Activated CD4-positive, alpha-beta memory T cell treated with anti-CD3 and anti-CD28 coated beads for 36 hours (primary cell): ENCODE measurements at regions of chr1 and their contacts with region 1.

Region 1: GRCh38 chr1:55021965-55022546 is 17.3 kb upstream of the PCSK9 start:
- DNase-seq: peak; percentile 80
- H3K4me3 Mint-ChIP-seq: no peak overlapping the region
- H3K27ac Mint-ChIP-seq: no peak overlapping the region
- H3K4me1 Mint-ChIP-seq: peaks cover 3% of the 10 kb centered on the region
- H3K27me3 Mint-ChIP-seq: peaks cover 11% of the 10 kb centered on the region

Region 2: DNA sequence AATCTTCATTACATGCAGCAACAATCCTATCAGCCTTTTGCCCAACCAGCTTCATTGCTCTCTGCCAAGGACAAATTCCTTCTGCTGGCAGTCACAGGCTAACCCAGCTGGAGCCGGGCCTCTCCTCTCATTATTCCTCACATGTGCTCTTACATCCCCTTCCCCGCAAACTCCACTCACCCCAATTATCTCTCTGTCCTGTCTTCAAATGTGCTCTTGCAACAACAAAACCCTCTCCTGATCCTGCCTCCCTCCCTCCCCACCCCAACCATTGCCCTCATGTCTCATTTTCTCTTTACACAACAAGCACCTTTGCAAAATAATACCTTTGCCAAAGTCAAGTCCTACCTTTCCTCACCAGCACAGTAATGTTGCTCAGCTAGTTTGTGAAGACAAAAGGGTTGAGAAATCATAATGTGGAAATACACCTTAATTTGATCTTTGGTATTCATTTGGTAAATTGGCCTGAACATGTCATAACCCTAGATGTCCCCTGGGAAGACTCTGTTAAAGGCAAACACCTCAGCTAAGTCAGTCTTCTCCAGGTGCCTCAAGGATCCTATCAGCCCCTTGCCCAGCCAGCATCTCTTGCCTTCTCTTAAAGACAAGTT is 99.0 kb before region 1 on chr1:
- CTCF ChIA-PET with region 1: no interaction called
- POLR2A ChIA-PET with region 1: no interaction called
- intact Hi-C with region 1: no loop called
- DNase-seq: no peak
- H3K4me3 Mint-ChIP-seq: no peak overlapping the region
- H3K27ac Mint-ChIP-seq: no peak overlapping the region
- H3K4me1 Mint-ChIP-seq: no peaks in the 10 kb centered on the region
- H3K27me3 Mint-ChIP-seq: peaks cover 3% of the 10 kb centered on the region

Region 3: DNA sequence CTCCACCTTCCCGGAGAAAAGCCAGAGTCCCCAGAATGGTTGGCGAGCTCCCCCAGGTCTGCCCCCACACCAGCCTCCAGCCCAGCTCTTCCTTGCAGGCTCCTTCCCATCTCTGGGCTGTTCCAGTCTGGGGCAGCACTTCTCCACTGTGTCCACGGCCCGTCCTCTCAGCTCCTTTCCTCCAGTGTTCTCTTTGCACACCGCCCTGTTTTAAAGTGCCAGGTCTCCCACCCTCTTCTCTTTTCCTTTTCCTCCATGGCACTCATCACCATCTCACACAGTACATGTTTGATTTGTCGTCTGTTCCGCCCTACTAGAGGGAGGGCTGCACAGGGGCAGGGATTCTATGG is 11.2 kb after region 1 on chr1:
- CTCF ChIA-PET with region 1: interaction called, 10 read pairs
- POLR2A ChIA-PET with region 1: no interaction called
- intact Hi-C with region 1: no loop called
- DNase-seq: no peak
- H3K4me3 Mint-ChIP-seq: no peak overlapping the region
- H3K27ac Mint-ChIP-seq: no peak overlapping the region
- H3K4me1 Mint-ChIP-seq: no peaks in the 10 kb centered on the region
- H3K27me3 Mint-ChIP-seq: peaks cover 19% of the 10 kb centered on the region

Region 4: DNA sequence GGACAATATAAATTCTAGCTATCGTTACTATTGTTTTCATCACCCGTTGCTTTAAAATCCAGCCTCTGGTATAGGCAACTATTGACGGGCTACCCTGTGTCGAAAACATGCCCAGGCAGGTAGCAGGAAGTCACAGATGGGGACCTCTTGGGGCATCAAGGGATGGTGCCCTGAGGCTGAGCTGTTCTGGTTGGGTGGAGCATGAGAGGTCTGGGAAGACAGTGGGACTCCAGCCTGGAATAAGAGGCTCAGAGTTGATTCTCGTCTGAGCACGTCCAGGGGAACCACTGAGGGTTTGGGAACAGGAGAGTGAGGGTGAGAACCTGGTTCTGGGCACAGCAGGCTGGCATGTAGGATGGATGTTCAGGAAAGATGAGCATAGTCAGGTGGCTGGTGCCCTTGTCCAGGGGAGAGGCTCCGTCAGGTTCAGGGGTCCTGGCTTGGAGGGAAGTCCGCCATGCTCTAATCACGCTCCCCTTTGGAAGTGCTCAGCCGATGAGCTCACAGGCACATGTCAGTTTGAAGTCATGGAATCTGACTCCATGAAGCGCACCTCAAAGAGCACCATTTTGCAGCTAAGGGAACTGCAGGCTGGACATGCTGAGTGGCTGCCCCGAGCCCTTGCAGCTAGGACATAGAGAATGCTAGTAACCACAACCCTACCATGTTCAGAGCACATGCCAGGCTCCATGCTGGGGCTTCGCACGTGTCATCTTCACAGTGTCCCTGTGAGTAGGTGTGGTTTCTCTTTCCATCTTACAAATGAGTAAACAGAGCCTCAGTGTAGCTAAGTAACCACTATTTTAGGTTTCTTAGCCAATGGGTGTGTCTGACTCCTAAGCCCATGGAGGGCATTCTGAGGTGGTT is 38.3 kb after region 1 on chr1:
- CTCF ChIA-PET with region 1: interaction called, 10 read pairs
- POLR2A ChIA-PET with region 1: no interaction called
- intact Hi-C with region 1: no loop called
- DNase-seq: peak; percentile 49
- H3K4me3 Mint-ChIP-seq: no peak overlapping the region
- H3K27ac Mint-ChIP-seq: no peak overlapping the region
- H3K4me1 Mint-ChIP-seq: peaks cover 7% of the 10 kb centered on the region
- H3K27me3 Mint-ChIP-seq: no peaks in the 10 kb centered on the region